ENCODE measurements at regions of chr12 and their contacts with region 1.

Region 1: GRCh38 chr12:48995061-48995879 is 3.9 kb downstream of the DDN start:
- DNase-seq: peak; percentile 62 to 85 (median 74)
- H3K4me3 ChIP-seq: no peak overlapping the region
- H3K27ac ChIP-seq: no peak overlapping the region
- H3K4me1 ChIP-seq: peaks cover 6% of the 10 kb centered on the region
- H3K27me3 ChIP-seq: no peaks in the 10 kb centered on the region
- CTCF ChIP-seq: peak; percentile 63 to 66 (median 64)
- EP300 ChIP-seq: no peak
- POLR2A ChIP-seq: no peak

Region 2: GRCh38 chr12:48865434-48866290 is 129.6 kb before region 1 on chr12 and contains the start of gene RND1:
- intact Hi-C with region 1: loop called in 1 of 4 experiments (anchors 10 kb)
- DNase-seq: peak; percentile 82 to 92 (median 86)
- H3K4me3 ChIP-seq: peak within 1 kb of the TSS; percentile 55
- H3K27ac ChIP-seq: no peak within 1 kb of the TSS
- H3K4me1 ChIP-seq: peaks cover 2% of the 10 kb centered on the region
- H3K27me3 ChIP-seq: no peaks in the 10 kb centered on the region
- CTCF ChIP-seq: no peak
- EP300 ChIP-seq: no peak
- POLR2A ChIP-seq: peak; percentile 91
- total RNA-seq, gene RND1: 0.23 to 3.8 (median 0.38) TPM

Measured in ovary (tissue), 10 donors.